A673 (cell line): ENCODE measurements at regions of chr5 and their contacts with region 1.

Region 1: DNA sequence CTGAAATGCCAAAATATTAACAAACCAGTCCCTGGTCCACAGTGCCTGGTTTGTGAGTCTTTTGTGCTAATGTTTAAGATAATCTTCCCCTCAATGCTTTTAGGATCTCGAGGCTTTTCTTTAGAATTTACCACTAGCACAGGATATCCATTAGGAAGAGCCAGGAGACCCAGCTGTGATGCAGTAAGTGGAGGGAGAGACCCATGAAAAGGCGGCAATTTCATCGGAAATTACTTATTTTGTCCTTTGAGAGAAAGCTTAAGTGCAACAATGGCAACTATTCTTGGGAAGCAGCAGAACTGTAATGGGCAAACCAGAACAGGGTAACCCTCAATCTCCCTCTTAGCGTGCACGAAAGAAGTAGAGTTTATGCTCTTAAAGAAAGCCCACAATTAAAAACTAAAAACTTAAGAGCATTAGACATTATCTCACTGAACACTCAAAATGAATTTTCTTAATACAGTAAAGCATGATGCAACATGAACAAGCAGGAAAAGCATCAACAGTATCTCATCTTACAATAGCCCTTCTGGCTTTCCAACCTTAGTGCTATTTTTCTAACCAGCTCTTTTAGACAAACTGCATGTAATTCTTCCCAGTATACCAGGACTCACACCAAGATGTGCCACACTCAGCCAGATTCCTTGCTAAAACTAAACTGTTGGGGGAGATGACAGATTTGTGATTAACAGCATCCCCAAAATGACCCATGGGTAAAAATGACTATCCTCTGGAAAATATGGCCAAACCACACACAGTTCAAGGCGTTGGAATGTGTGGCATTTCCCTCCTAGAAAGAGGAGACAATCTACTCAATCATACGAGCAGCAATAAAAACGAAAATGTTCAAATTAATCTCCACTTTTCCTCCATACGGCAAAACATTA is 36.4 kb downstream of the PWWP2A start:
- DNase-seq: peak; percentile 32
- H3K4me3 ChIP-seq: no peak overlapping the region
- H3K27ac ChIP-seq: peak overlapping the region; percentile 69
- H3K4me1 ChIP-seq: peaks cover 15% of the 10 kb centered on the region
- H3K27me3 ChIP-seq: no peaks in the 10 kb centered on the region
- CTCF ChIP-seq: no peak

Region 2: GRCh38 chr5:159936686-159937329 is 146.0 kb before region 1 on chr5:
- CTCF ChIA-PET with region 1: no interaction called
- POLR2A ChIA-PET with region 1: no interaction called
- intact Hi-C with region 1: no loop called
- DNase-seq: no peak
- H3K4me3 ChIP-seq: no peak overlapping the region
- H3K27ac ChIP-seq: no peak overlapping the region
- H3K4me1 ChIP-seq: no peaks in the 10 kb centered on the region
- H3K27me3 ChIP-seq: peaks cover 7% of the 10 kb centered on the region
- CTCF ChIP-seq: no peak

Region 3: DNA sequence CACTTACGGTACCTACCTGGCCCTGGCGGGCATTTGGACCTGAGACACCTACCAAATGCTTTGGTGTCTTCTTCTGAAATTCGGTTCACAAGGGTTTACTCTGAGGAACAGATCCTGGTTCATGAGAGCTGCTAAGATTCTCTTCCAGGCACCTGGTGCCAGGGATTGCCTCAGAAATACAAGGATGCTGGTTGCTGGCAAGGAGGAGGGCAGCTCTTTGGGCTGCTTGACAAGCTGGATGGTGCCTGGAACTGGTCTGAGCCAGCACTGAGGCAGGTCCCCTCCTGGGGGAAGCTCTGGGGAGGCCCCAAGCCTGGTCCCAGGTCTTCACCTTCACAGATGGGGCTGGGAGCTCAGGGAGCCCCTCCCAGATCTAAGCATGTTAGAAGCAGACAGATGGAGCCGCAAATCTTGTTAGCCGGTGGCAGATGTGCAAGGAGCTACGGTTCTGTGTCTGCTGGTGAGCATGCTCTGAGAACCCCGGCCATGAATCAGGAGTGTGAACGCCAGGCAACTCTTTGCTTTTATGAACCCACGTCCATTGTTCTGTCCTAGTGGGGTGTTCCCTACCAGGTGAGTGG is 162.7 kb after region 1 on chr5:
- CTCF ChIA-PET with region 1: interaction called, 10 read pairs
- POLR2A ChIA-PET with region 1: no interaction called
- intact Hi-C with region 1: no loop called
- DNase-seq: no peak
- H3K4me3 ChIP-seq: no peak overlapping the region
- H3K27ac ChIP-seq: no peak overlapping the region
- H3K4me1 ChIP-seq: no peaks in the 10 kb centered on the region
- H3K27me3 ChIP-seq: no peaks in the 10 kb centered on the region
- CTCF ChIP-seq: no peak

Region 4: GRCh38 chr5:160390787-160391696 is 308.2 kb after region 1 on chr5:
- CTCF ChIA-PET with region 1: interaction called, 6 read pairs
- POLR2A ChIA-PET with region 1: no interaction called
- intact Hi-C with region 1: loop called (anchors 5 kb)
- DNase-seq: peak; percentile 32
- H3K4me3 ChIP-seq: no peak overlapping the region
- H3K27ac ChIP-seq: no peak overlapping the region
- H3K4me1 ChIP-seq: no peaks in the 10 kb centered on the region
- H3K27me3 ChIP-seq: no peaks in the 10 kb centered on the region
- CTCF ChIP-seq: peak; percentile 63